ENCODE measurements at regions of chr9 and their contacts with region 1.

Region 1: DNA sequence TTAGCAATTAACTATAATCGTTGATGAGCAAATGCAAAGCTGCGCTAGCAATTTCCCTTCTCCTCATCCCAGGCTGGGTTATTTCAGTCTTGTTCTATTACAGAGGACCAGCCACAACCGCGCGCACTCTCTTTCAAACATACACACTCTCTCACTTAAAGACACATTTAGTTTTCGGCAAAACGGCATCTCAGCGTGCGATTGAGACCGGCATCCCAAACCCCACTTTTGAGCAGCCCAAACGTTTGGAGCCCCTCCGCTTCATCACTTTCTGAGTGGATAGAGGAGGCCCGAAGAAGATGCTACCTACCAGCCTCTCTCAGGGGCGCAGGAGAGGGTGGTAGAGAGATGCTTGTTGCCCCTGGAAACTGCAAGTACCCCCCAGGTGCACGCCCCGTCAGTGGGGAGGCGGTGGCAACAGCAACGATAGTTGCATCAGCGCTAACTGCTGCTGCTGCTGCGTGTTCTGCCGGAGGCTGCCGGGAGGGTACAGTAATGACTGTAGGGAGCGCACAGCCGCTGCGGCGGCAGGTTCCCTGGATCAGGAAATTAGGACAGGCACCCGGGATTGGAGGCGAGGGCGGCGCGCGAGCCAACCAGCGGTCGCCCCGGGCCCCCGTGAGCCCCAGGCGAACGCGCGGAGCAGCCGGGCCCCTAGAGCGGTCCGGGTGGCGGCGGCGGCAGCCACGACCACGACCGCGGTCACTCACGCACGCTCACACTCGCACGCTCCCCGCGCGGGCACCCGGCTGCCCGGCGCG is 488 bp upstream of the VLDLR start:
- DNase-seq: peak; percentile 91
- ATAC-seq: peak; percentile 87

Region 2: DNA sequence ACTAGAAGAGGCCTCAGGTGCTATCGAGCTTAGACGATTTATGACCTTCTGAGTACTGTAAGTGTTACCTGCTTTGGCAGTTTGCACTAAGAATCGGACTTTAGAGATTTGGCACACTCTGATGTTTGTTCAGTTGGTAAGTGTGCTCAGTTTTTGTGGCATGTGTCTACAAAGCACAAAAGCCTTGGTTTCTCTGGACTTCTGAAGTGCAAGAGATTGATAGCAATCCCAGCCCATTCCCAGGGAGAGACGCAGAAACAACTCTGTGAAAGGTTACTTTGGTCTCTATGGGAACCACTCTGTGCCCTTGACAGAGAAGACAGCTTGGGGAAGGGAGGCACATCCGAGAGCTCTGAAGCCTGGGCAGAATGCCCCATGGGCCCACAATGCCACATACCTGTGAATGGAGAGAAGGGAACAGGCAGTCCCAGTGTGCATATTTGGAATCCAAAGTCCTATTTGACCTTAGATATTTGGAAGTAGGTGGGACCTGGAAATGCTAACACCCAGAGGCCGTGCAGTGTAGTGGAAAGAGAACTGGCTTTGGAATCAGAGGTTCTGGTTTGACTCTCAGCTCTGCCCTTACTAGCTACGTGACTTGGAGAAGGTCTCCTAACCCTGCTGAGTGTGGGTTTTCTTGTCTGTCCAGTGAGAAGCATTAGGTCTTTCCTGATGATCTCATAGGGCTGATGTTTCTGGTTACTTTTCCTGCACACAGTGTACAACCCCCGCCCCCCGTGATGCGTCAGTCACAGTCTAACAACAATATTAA is 193.8 kb before region 1 on chr9:
- intact Hi-C with region 1: loop called (anchors 5 kb)
- DNase-seq: peak; percentile 75
- ATAC-seq: peak; percentile 90

Region 3: DNA sequence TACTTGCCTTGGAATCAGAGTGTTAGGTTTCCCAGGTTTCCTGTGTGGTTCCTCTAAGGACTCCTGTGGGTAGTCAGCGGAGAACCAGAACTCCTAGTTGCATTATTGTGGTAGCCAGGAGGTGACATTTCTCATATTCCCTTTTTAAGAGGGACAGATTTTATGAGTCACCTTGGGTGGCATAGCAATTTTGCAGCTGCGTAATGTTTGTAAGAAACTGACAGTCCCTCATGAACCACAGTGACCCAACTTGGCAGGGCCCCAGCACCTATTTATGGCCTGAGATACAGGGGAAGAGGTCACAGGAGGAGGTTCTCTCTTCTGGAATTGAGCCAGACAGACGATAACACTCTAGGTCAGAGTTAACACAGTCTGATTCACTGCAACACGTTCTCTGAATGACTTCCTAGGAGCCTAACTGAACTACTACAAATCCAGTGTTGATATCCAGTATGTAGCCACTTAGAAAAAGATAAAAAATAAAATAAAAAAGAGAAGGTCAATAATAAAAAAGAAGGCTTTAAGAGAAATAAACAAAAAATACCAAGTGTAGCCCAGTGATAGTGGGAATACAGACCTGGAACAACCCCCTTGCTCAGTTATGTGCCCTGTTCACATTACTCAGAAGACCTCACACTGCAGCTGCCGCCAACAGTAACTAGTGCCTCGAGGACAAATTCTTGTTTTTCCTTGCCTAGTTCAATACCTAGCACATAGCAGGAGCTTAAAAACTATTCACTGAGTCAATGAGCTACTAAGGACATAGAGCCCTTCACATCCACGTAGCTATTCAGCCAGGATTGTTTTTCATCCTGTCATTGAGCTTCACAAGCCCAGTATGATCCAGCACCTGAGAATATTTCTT is 50.3 kb before region 1 on chr9:
- intact Hi-C with region 1: loop called (anchors 1 kb)
- DNase-seq: peak; percentile 92
- ATAC-seq: peak; percentile 90

Region 4: DNA sequence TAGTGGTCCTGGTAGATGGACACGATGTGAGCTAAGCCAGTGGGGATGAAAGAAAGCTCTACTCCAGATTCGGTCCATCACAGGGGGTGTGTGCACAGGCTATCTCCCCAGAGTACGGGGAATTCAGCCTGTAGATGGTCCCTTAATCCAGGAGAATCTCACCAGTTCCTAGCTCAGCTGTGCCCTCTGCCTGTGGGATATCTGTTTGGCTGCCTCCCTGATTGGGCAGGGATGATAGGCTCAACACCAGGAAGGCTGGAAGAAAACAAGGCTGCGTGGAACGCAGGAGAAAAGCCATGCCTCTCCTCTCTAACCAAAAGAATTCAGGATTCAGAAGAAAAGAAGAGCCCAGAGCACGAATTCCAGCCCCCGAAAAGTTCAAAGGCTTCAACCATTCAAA is 41.4 kb after region 1 on chr9:
- intact Hi-C with region 1: loop called (anchors 5 kb)
- DNase-seq: no peak
- ATAC-seq: no peak

Region 5: DNA sequence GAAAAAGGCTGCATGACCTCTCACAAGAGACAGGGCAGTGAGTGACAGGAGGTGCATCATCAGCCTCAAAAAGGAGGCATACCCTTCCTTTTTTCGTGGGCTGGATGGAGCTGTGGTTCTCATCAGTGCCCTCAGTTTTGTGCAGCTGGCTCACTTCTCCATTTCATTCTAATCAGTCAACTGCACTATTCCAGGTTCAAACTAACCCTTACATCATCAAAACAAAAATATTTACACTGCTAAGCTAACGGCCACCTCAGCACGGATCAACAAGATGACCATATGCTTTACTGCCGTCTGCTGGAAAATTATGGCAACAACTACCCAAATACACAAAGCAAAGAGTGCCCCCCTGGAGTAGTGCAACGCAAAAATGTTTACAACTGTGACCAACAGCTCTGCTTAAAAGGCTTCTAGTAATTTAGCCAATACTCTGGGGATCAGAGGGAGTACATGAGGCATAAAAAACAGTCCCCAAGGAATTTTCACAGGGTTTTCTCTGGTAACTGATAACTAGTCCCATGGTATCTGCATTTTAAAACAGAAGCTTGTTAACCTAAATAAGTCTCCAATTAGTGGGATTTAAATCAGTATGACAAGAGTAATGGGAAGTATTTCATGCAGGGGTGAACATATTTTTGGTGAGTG is 107.0 kb after region 1 on chr9:
- intact Hi-C with region 1: loop called (anchors 5 kb)
- DNase-seq: no peak
- ATAC-seq: peak; percentile 82